CD8-positive, alpha-beta memory T cell (primary cell): ENCODE measurements at regions of chr10 and their contacts with region 1.

Region 1: GRCh38 chr10:61903221-61903927 is 1.9 kb downstream of the ARID5B start:
- DNase-seq: peak; percentile 49 to 78 (median 65)
- H3K4me3 ChIP-seq: peak overlapping the region; percentile 98
- H3K4me3 Mint-ChIP-seq: peak overlapping the region; percentile 88 to 94 (median 91)
- H3K27ac ChIP-seq: peak overlapping the region; percentile 91
- H3K27ac Mint-ChIP-seq: peak overlapping the region; percentile 78 to 99 (median 94)
- H3K4me1 ChIP-seq: peaks cover 36% of the 10 kb centered on the region
- H3K4me1 Mint-ChIP-seq: peaks cover 34 to 65% (median 57%) of the 10 kb centered on the region in 3 donors
- H3K27me3 ChIP-seq: no peaks in the 10 kb centered on the region
- H3K27me3 Mint-ChIP-seq: peaks cover 0 to 4% of the 10 kb centered on the region in 2 donors

Region 2: GRCh38 chr10:61662794-61663259 is 240.5 kb before region 1 on chr10 and contains the start of gene CABCOCO1:
- CTCF ChIA-PET with region 1: no interaction called
- POLR2A ChIA-PET with region 1: no interaction called
- DNase-seq: no peak
- H3K4me3 ChIP-seq: no peak within 1 kb of the TSS
- H3K4me3 Mint-ChIP-seq: no peak within 1 kb of the TSS
- H3K27ac ChIP-seq: no peak within 1 kb of the TSS
- H3K27ac Mint-ChIP-seq: no peak within 1 kb of the TSS
- H3K4me1 ChIP-seq: no peaks in the 10 kb centered on the region
- H3K4me1 Mint-ChIP-seq: peaks cover 0 to 1% (median 0%) of the 10 kb centered on the region in 3 donors
- H3K27me3 ChIP-seq: peaks cover 8% of the 10 kb centered on the region
- H3K27me3 Mint-ChIP-seq: peaks cover 15 to 46% of the 10 kb centered on the region in 2 donors
- total RNA-seq, gene CABCOCO1: not detected

Region 3: GRCh38 chr10:61882621-61883373 is 20.6 kb before region 1 on chr10:
- CTCF ChIA-PET with region 1: no interaction called
- POLR2A ChIA-PET with region 1: no interaction called
- DNase-seq: no peak
- H3K4me3 ChIP-seq: no peak overlapping the region
- H3K4me3 Mint-ChIP-seq: no peak overlapping the region
- H3K27ac ChIP-seq: no peak overlapping the region
- H3K27ac Mint-ChIP-seq: peak overlapping the region in 2 of 8 donors; percentile 5 to 15
- H3K4me1 ChIP-seq: no peaks in the 10 kb centered on the region
- H3K4me1 Mint-ChIP-seq: peaks cover 11 to 13% (median 12%) of the 10 kb centered on the region in 3 donors
- H3K27me3 ChIP-seq: no peaks in the 10 kb centered on the region
- H3K27me3 Mint-ChIP-seq: peaks cover 3 to 7% of the 10 kb centered on the region in 2 donors

Region 4: DNA sequence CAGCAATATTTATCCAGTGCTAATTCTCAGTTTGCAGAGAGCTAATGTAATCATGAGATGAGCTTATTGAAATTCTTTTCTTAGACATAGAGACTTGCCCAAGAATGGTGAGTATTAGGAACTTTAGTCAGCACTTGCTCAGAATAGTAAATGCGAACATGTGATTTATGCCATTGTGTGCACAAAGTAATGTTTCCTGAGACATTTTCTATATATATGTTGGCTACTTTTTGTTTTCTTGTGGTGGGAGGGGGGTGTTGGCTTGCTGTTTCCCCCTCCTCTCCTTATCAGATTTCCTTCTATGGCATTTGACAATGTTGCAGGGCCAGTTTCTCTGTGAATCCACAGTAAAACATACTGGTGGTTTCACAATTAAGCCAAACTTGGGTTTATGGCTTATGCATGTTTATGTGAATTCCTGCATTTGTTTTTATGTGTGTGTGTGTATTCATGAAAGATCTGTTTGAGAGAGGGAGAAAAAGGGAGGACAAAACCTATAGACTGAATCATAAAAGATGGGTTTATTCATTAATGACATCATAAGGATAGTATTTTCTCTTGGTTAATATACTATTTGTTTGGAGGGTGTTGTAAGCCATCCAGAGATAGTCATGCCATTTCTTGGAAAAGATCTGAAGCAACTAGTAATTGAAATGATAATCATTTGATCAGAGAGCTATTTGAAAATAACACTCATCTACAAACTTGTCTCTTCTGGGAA is 34.4 kb after region 1 on chr10:
- CTCF ChIA-PET with region 1: interaction called, 19 read pairs
- POLR2A ChIA-PET with region 1: interaction called, 13 read pairs
- DNase-seq: no peak
- H3K4me3 ChIP-seq: no peak overlapping the region
- H3K4me3 Mint-ChIP-seq: peak overlapping the region in 6 of 7 donors; percentile 6 to 70 (median 36)
- H3K27ac ChIP-seq: no peak overlapping the region
- H3K27ac Mint-ChIP-seq: peak overlapping the region; percentile 2 to 94 (median 80)
- H3K4me1 ChIP-seq: peaks cover 71% of the 10 kb centered on the region
- H3K4me1 Mint-ChIP-seq: peaks cover 74 to 93% (median 85%) of the 10 kb centered on the region in 3 donors
- H3K27me3 ChIP-seq: no peaks in the 10 kb centered on the region
- H3K27me3 Mint-ChIP-seq: no peaks in the 10 kb centered on the region

Region 5: GRCh38 chr10:61943674-61944410 is 40.5 kb after region 1 on chr10:
- CTCF ChIA-PET with region 1: interaction called, 19 read pairs
- POLR2A ChIA-PET with region 1: interaction called, 13 read pairs
- DNase-seq: peak in 1 of 5 donors; percentile 42
- H3K4me3 ChIP-seq: peak overlapping the region; percentile 10
- H3K4me3 Mint-ChIP-seq: peak overlapping the region; percentile 45 to 86 (median 80)
- H3K27ac ChIP-seq: peak overlapping the region; percentile 59
- H3K27ac Mint-ChIP-seq: peak overlapping the region; percentile 85 to 98 (median 94)
- H3K4me1 ChIP-seq: peaks cover 53% of the 10 kb centered on the region
- H3K4me1 Mint-ChIP-seq: peaks cover 54 to 72% (median 62%) of the 10 kb centered on the region in 3 donors
- H3K27me3 ChIP-seq: no peaks in the 10 kb centered on the region
- H3K27me3 Mint-ChIP-seq: no peaks in the 10 kb centered on the region

Region 6: GRCh38 chr10:61992671-61993668 is 89.6 kb after region 1 on chr10:
- CTCF ChIA-PET with region 1: interaction called, 8 read pairs
- POLR2A ChIA-PET with region 1: interaction called, 16 read pairs
- DNase-seq: peak; percentile 25 to 76 (median 39)
- H3K4me3 ChIP-seq: peak overlapping the region; percentile 33
- H3K4me3 Mint-ChIP-seq: peak overlapping the region; percentile 5 to 79 (median 62)
- H3K27ac ChIP-seq: peak overlapping the region; percentile 51
- H3K27ac Mint-ChIP-seq: peak overlapping the region; percentile 79 to 96 (median 90)
- H3K4me1 ChIP-seq: peaks cover 38% of the 10 kb centered on the region
- H3K4me1 Mint-ChIP-seq: peaks cover 44 to 82% (median 77%) of the 10 kb centered on the region in 3 donors
- H3K27me3 ChIP-seq: no peaks in the 10 kb centered on the region
- H3K27me3 Mint-ChIP-seq: peaks cover 0 to 1% of the 10 kb centered on the region in 2 donors

Region 7: DNA sequence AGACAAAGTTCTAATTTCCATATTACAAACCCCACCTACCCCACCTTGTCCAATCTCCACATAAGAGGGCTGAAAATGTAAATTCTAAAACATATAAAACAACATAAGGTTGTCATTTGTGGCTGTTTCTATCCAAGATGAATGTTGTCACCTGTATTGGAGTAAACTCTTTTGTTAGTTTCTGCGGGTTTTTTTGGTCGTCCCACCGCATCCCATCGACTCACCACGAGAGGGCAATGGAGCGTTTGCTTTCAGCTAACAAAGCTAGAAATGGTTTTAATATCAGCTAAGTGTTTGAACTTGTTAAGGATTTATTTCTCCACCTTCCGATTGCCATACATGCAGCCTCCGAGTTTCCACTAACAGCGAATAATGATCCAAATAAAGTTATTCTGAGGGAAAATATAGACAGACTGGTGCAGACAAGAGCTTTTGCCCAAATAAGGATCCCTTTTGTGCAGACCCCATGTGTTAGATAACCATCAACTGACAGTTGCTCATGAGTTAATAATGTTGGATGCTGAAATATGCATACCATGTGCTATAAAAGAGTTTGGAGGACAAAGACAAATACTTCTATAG is 135.3 kb after region 1 on chr10:
- CTCF ChIA-PET with region 1: interaction called, 47 read pairs
- POLR2A ChIA-PET with region 1: interaction called, 14 read pairs
- DNase-seq: peak; percentile 50 to 81 (median 61)
- H3K4me3 ChIP-seq: peak overlapping the region; percentile 10
- H3K4me3 Mint-ChIP-seq: peak overlapping the region in 6 of 7 donors; percentile 9 to 67 (median 42)
- H3K27ac ChIP-seq: no peak overlapping the region
- H3K27ac Mint-ChIP-seq: peak overlapping the region in 6 of 8 donors; percentile 1 to 78 (median 42)
- H3K4me1 ChIP-seq: peaks cover 49% of the 10 kb centered on the region
- H3K4me1 Mint-ChIP-seq: peaks cover 49 to 80% (median 70%) of the 10 kb centered on the region in 3 donors
- H3K27me3 ChIP-seq: no peaks in the 10 kb centered on the region
- H3K27me3 Mint-ChIP-seq: no peaks in the 10 kb centered on the region

Region 8: GRCh38 chr10:62050893-62051433 is 147.6 kb after region 1 on chr10:
- CTCF ChIA-PET with region 1: interaction called, 23 read pairs
- POLR2A ChIA-PET with region 1: interaction called, 6 read pairs
- DNase-seq: peak; percentile 23 to 83 (median 52)
- H3K4me3 ChIP-seq: peak overlapping the region; percentile 47
- H3K4me3 Mint-ChIP-seq: peak overlapping the region; percentile 78 to 93 (median 88)
- H3K27ac ChIP-seq: peak overlapping the region; percentile 60
- H3K27ac Mint-ChIP-seq: peak overlapping the region; percentile 79 to 99 (median 94)
- H3K4me1 ChIP-seq: peaks cover 88% of the 10 kb centered on the region
- H3K4me1 Mint-ChIP-seq: peaks cover 96 to 99% (median 98%) of the 10 kb centered on the region in 3 donors
- H3K27me3 ChIP-seq: no peaks in the 10 kb centered on the region
- H3K27me3 Mint-ChIP-seq: no peaks in the 10 kb centered on the region